ENCODE measurements at regions of chr6 and their contacts with region 1.

Region 1: GRCh38 chr6:27146706-27147505 is 100.6 kb upstream of the PRSS16 start:
- DNase-seq: peak; percentile 61 to 99 (median 72)
- ATAC-seq: peak; percentile 86
- H3K4me3 ChIP-seq: peak overlapping the region; percentile 69
- H3K4me3 Mint-ChIP-seq: no peak overlapping the region
- H3K27ac ChIP-seq: peak overlapping the region; percentile 84 to 97
- H3K27ac Mint-ChIP-seq: no peak overlapping the region
- H3K4me1 ChIP-seq: peaks cover 17% of the 10 kb centered on the region
- H3K4me1 Mint-ChIP-seq: peaks cover 11% of the 10 kb centered on the region
- H3K27me3 ChIP-seq: no peaks in the 10 kb centered on the region
- H3K27me3 Mint-ChIP-seq: no peaks in the 10 kb centered on the region
- CTCF ChIP-seq: no peak

Region 2: GRCh38 chr6:26175428-26176181 is 971.3 kb before region 1 on chr6:
- CTCF ChIA-PET with region 1: no interaction called
- POLR2A ChIA-PET with region 1: interaction called, 15 read pairs
- intact Hi-C with region 1: no loop called
- DNase-seq: peak in 11 of 14 experiments; percentile 13 to 85 (median 54)
- ATAC-seq: no peak
- H3K4me3 ChIP-seq: no peak overlapping the region
- H3K4me3 Mint-ChIP-seq: peak overlapping the region; percentile 83
- H3K27ac ChIP-seq: peak overlapping the region in 1 of 2 donors; percentile 41
- H3K27ac Mint-ChIP-seq: peak overlapping the region; percentile 93
- H3K4me1 ChIP-seq: peaks cover 17% of the 10 kb centered on the region
- H3K4me1 Mint-ChIP-seq: peaks cover 53% of the 10 kb centered on the region
- H3K27me3 ChIP-seq: no peaks in the 10 kb centered on the region
- H3K27me3 Mint-ChIP-seq: no peaks in the 10 kb centered on the region
- CTCF ChIP-seq: peak; percentile 87

Region 3: DNA sequence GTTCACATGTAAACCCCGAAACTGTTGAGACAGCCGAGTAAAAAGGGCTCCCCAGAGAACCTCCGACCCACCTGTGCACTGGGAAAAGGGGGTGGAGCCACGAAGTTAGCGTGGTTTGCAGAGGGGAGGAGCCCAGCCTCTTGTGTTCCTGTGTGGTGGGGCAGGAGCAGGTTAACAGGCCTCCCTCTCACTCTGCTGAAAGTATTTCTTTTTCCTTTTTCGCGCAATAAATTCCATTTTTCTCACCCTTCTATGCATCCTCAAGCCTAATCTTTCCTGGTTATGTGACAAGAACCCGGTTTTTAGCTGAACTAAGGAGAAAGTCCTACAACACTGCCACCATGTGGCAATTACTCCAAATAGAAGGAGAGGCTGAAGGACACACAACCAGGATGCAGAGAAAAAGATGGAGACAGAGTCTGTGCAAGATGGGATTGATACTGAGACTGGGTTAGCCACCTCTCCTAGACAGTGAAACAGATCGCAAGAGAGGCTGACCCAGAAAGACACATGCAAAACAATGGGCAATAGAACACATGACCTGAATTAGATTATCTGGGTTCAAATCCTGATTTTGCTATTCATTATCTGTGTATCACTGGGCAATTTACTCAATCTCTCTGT is 68.1 kb before region 1 on chr6:
- CTCF ChIA-PET with region 1: no interaction called
- POLR2A ChIA-PET with region 1: no interaction called
- intact Hi-C with region 1: no loop called
- DNase-seq: peak in 11 of 14 experiments; percentile 3 to 69 (median 15)
- ATAC-seq: peak; percentile 58
- H3K4me3 ChIP-seq: peak overlapping the region; percentile 37
- H3K4me3 Mint-ChIP-seq: peak overlapping the region; percentile 20
- H3K27ac ChIP-seq: no peak overlapping the region
- H3K27ac Mint-ChIP-seq: no peak overlapping the region
- H3K4me1 ChIP-seq: peaks cover 5% of the 10 kb centered on the region
- H3K4me1 Mint-ChIP-seq: peaks cover 4% of the 10 kb centered on the region
- H3K27me3 ChIP-seq: peaks cover 9 to 57% of the 10 kb centered on the region in 2 experiments
- H3K27me3 Mint-ChIP-seq: peaks cover 87% of the 10 kb centered on the region
- CTCF ChIP-seq: peak; percentile 51

Region 4: GRCh38 chr6:27126815-27127537 is 19.9 kb before region 1 on chr6:
- CTCF ChIA-PET with region 1: interaction called, 14 read pairs
- POLR2A ChIA-PET with region 1: interaction called, 534 read pairs
- intact Hi-C with region 1: loop called in 1 of 2 experiments (anchors 1 kb)
- DNase-seq: peak; percentile 65 to 93 (median 76)
- ATAC-seq: peak; percentile 75
- H3K4me3 ChIP-seq: peak overlapping the region; percentile 39
- H3K4me3 Mint-ChIP-seq: peak overlapping the region; percentile 84
- H3K27ac ChIP-seq: no peak overlapping the region
- H3K27ac Mint-ChIP-seq: peak overlapping the region; percentile 65
- H3K4me1 ChIP-seq: peaks cover 17% of the 10 kb centered on the region
- H3K4me1 Mint-ChIP-seq: peaks cover 28% of the 10 kb centered on the region
- H3K27me3 ChIP-seq: no peaks in the 10 kb centered on the region
- H3K27me3 Mint-ChIP-seq: no peaks in the 10 kb centered on the region
- CTCF ChIP-seq: peak; percentile 95

Region 5: DNA sequence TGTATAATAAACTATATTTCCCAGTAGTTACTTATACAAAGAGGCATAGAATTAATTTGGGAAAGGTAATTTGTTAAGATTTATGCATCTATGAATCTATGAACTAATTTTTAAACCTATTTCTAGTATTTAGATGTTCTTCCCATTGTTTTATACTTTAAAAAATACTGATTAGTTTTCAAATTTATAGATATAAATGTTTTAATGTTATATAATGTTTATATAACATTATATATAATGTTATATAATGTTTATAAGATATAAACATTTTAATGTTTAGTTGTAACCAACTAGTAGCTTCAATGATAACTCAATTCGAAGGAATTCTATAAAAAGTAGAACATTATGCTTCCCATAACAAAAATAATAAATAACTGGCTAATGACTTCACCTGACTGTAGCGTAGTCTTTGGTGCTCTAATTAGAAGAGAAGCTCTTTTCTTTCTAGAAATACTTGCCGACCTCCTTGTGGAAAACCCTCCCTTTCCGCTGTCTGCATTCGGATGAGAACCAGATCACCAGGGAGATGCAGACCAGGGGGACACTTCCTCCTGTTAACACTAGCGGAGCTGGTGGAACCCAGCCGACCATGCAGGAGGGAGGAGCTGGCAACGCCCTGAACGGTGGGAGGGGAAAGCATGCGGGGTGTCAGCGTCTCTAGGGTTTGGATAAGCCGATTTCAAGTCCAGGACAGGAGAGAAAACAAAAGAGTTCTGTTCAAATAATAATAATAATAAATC is 606.9 kb after region 1 on chr6:
- CTCF ChIA-PET with region 1: interaction called, 3 read pairs
- POLR2A ChIA-PET with region 1: interaction called, 25 read pairs
- intact Hi-C with region 1: no loop called
- DNase-seq: peak; percentile 31 to 81 (median 54)
- ATAC-seq: peak; percentile 11
- H3K4me3 ChIP-seq: peak overlapping the region; percentile 71
- H3K4me3 Mint-ChIP-seq: peak overlapping the region; percentile 97
- H3K27ac ChIP-seq: no peak overlapping the region
- H3K27ac Mint-ChIP-seq: peak overlapping the region; percentile 98
- H3K4me1 ChIP-seq: peaks cover 22% of the 10 kb centered on the region
- H3K4me1 Mint-ChIP-seq: peaks cover 41% of the 10 kb centered on the region
- H3K27me3 ChIP-seq: no peaks in the 10 kb centered on the region
- H3K27me3 Mint-ChIP-seq: peaks cover 10% of the 10 kb centered on the region
- CTCF ChIP-seq: no peak

Region 6: GRCh38 chr6:27864906-27865849 is 718.3 kb after region 1 on chr6:
- CTCF ChIA-PET with region 1: no interaction called
- POLR2A ChIA-PET with region 1: interaction called, 62 read pairs
- intact Hi-C with region 1: no loop called
- DNase-seq: peak in 13 of 14 experiments; percentile 35 to 97 (median 61)
- ATAC-seq: peak; percentile 83
- H3K4me3 ChIP-seq: peak overlapping the region; percentile 59
- H3K4me3 Mint-ChIP-seq: peak overlapping the region; percentile 100
- H3K27ac ChIP-seq: peak overlapping the region; percentile 54 to 78
- H3K27ac Mint-ChIP-seq: peak overlapping the region; percentile 93
- H3K4me1 ChIP-seq: peaks cover 38% of the 10 kb centered on the region
- H3K4me1 Mint-ChIP-seq: peaks cover 41% of the 10 kb centered on the region
- H3K27me3 ChIP-seq: no peaks in the 10 kb centered on the region
- H3K27me3 Mint-ChIP-seq: peaks cover 3% of the 10 kb centered on the region
- CTCF ChIP-seq: no peak